ENCODE measurements at regions of chr3 and their contacts with region 1.

Region 1: GRCh38 chr3:121707531-121708273 is 41.8 kb downstream of the GOLGB1 start:
- DNase-seq: no peak
- ATAC-seq: no peak
- H3K4me3 ChIP-seq: no peak overlapping the region
- H3K27ac ChIP-seq: no peak overlapping the region
- H3K4me1 ChIP-seq: peaks cover 0 to 15% (median 6%) of the 10 kb centered on the region in 9 donors
- H3K27me3 ChIP-seq: no peaks in the 10 kb centered on the region
- CTCF ChIP-seq: no peak

Region 2: DNA sequence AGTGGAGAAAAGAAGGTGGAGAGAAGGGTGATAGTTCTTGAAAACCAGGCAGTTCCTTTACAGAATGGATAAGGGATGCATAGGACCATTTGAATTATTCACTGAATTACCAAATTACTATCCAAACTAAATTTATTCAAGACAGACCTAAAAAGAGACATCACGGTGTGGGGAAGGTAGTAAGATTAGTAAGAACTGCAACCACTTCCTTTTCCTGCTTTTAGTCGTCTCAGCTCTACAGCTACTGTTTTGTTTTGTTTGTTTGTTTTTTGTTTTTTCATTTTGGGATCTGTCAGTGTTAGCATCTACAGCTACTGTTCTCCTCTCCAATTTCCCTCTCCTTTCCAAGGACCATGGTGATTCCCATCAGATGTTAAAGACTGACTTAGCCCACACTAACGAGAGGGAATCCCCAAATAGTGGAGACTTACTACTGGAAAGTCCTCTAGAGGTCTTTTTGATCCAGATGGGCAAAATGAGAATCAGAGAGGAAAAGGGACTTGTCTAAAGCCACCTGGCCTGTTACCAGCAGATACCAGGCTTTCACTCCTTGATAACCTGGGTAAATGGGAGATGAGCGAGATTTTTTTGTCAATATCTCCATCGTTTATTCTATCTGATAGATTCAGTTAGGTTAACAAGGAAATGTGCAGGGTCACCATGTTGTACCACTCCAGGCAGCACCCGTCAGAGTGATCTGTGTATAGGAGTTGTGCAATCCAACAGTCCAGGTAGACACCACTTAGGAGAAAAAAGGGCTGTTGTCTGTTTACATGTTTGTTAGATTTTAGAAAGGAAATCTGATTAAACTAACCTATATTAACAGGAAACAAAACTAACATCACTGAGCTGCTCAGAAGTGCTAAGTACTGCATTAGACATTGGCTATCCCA is 53.0 kb before region 1 on chr3:
- intact Hi-C with region 1: loop called in 1 of 10 experiments (anchors 10 kb)
- DNase-seq: no peak
- ATAC-seq: no peak
- H3K4me3 ChIP-seq: no peak overlapping the region
- H3K27ac ChIP-seq: peak overlapping the region in 1 of 10 donors; percentile 63
- H3K4me1 ChIP-seq: peaks cover 0 to 54% (median 10%) of the 10 kb centered on the region in 9 donors
- H3K27me3 ChIP-seq: no peaks in the 10 kb centered on the region
- CTCF ChIP-seq: no peak

Region 3: GRCh38 chr3:121667333-121667732 is 40.4 kb before region 1 on chr3:
- intact Hi-C with region 1: no loop called
- DNase-seq: no peak
- ATAC-seq: no peak
- H3K4me3 ChIP-seq: no peak overlapping the region
- H3K27ac ChIP-seq: peak overlapping the region in 2 of 10 donors; percentile 7 to 84
- H3K4me1 ChIP-seq: peaks cover 0 to 28% (median 4%) of the 10 kb centered on the region in 9 donors
- H3K27me3 ChIP-seq: no peaks in the 10 kb centered on the region
- CTCF ChIP-seq: no peak

Region 4: DNA sequence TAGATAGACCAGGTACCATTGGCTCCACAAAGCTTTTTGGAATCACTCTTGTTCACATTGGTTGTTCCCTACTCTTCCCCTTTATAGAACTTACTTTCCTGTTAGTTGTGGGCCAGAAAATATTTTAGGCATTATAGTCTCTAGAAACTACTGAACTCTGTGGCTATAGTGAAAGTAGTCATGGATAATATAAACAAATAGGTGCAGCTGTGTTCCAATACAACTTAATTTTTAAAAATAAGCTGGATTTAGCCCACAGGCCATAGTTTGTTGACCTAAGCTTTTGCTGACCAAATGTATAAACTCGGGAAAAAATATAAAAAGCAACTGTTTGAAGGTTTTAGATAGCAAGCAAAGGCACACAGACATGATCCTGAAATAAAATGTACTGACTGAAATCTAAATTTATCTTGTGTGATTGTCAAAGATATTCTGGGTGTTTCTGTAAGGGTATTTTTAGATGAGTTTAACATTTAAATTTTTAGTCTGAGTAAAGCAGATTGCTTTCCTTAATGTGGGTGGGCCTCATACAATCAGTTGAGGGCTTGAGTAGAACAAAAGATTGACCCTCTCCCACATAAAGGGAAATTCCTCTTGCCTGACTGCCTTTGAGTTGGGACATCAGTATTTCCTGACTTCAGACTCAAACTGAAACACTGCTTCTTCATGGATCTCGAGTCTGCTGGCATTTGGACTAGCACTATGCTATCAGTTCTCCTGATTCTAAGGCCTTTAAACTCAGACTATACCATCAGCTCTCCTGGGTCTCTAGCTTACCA is 113.9 kb after region 1 on chr3:
- intact Hi-C with region 1: no loop called
- DNase-seq: no peak
- ATAC-seq: no peak
- H3K4me3 ChIP-seq: no peak overlapping the region
- H3K27ac ChIP-seq: no peak overlapping the region
- H3K4me1 ChIP-seq: peaks cover 0 to 8% (median 0%) of the 10 kb centered on the region in 9 donors
- H3K27me3 ChIP-seq: no peaks in the 10 kb centered on the region
- CTCF ChIP-seq: no peak

Region 5: DNA sequence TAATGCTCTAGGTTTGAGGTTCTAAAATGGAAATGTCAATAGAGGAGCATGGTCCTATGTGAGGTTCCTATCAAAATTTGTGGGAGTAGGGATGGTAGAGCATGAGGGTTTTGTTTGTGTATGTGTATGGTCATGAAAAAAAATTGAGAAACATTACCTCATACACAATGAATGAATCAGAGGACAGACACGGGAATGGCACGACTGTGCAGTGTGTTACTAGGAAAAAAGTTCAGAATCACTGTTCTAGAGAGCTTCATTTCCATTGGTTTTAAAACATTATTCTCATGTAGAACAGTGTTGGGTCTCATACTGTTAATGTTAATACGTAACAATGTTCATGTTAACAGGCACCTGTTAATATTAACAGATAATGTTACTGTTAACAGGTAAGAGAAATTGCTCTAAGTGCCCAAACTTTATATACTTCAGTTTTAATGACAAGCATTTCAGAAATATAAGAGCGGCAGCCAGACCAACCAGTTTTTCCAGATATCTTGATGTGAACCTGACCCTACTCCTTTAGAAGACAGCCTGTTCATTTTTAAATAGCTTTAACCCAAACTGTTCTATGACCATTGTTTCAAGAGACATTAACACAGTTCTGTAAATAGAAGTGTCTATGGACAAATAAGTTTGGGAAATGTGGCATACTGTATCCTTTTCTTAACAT is 234.6 kb after region 1 on chr3:
- intact Hi-C with region 1: no loop called
- DNase-seq: no peak
- ATAC-seq: no peak
- H3K4me3 ChIP-seq: no peak overlapping the region
- H3K27ac ChIP-seq: no peak overlapping the region
- H3K4me1 ChIP-seq: no peaks in the 10 kb centered on the region
- H3K27me3 ChIP-seq: no peaks in the 10 kb centered on the region
- CTCF ChIP-seq: no peak

Measured in heart right ventricle (tissue), 16 donors.